Ascending aorta (tissue), 2 donors: ENCODE measurements at regions of chr1 and their contacts with region 1.

Region 1: GRCh38 chr1:183023601-183024316 is 539 bp downstream of the LAMC1 start:
- DNase-seq: peak in 1 of 2 donors; percentile 82
- H3K4me3 ChIP-seq: peak overlapping the region; percentile 87 to 100
- H3K27ac ChIP-seq: peak overlapping the region; percentile 100
- H3K4me1 ChIP-seq: peaks cover 0 to 20% of the 10 kb centered on the region in 2 donors
- H3K27me3 ChIP-seq: no peaks in the 10 kb centered on the region
- CTCF ChIP-seq: peak; percentile 26 to 51 (median 35)

Region 2: GRCh38 chr1:182839209-182840065 is 184.3 kb before region 1 on chr1 and contains the start of gene DHX9:
- intact Hi-C with region 1: no loop called
- DNase-seq: peak; percentile 55 to 96
- H3K4me3 ChIP-seq: peak within 1 kb of the TSS; percentile 75 to 95
- H3K27ac ChIP-seq: peak within 1 kb of the TSS; percentile 90 to 91
- H3K4me1 ChIP-seq: peaks cover 0 to 10% of the 10 kb centered on the region in 2 donors
- H3K27me3 ChIP-seq: no peaks in the 10 kb centered on the region
- CTCF ChIP-seq: peak in 1 of 3 experiments; percentile 20
- total RNA-seq, gene DHX9: 52.8 TPM

Region 3: GRCh38 chr1:182962554-182963115 is 61.1 kb before region 1 on chr1:
- intact Hi-C with region 1: loop called (anchors 1 kb)
- DNase-seq: peak in 1 of 2 donors; percentile 90
- H3K4me3 ChIP-seq: peak overlapping the region; percentile 32 to 33
- H3K27ac ChIP-seq: peak overlapping the region in 1 of 2 donors; percentile 12
- H3K4me1 ChIP-seq: peaks cover 0 to 2% of the 10 kb centered on the region in 2 donors
- H3K27me3 ChIP-seq: no peaks in the 10 kb centered on the region
- CTCF ChIP-seq: peak; percentile 91 to 92 (median 91)

Region 4: GRCh38 chr1:183075861-183076260 is 52.1 kb after region 1 on chr1:
- intact Hi-C with region 1: loop called (anchors 5 kb)
- DNase-seq: no peak
- H3K4me3 ChIP-seq: no peak overlapping the region
- H3K27ac ChIP-seq: peak overlapping the region; percentile 12 to 13
- H3K4me1 ChIP-seq: peaks cover 11 to 79% of the 10 kb centered on the region in 2 donors
- H3K27me3 ChIP-seq: no peaks in the 10 kb centered on the region
- CTCF ChIP-seq: no peak

Region 5: DNA sequence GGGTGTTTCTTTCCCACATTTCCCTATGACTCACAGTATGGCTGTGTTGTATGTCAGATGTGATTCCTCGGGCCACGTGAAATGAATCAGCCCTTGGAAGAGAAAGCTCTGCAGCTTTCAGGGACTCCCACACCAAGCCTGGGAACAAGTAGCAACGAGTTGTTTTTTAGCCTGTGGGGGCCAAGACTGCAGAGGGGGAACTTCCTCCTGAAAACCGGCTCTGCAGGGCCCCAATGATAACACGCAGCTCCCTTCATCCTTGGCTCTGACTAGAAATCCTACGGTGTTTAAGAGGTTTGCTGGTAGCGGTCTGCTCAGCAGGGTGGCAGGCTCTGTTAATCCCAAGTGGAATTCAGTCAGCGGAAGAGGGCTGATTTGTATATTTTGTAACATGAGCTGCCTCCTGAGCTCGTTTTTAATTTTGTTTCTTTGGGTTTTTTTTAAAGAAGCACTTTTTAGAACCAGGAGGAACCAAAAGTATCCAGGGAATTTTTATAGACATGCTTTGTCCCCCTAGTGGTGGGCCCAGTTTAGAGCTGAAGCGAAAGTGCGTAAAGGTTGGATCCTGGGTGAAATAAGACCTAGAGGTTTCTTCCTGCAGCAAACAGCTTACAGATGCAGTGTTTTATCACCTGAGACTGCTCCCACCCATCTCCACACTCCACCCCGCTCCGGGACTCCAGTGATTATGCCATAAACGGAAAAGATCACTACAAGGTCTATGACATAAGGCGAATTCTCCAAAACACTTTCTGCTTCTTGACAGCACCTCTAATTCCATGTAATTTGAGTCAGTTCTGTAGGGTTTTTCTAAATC is 211.1 kb after region 1 on chr1:
- intact Hi-C with region 1: loop called (anchors 5 kb)
- DNase-seq: peak; percentile 45 to 88
- H3K4me3 ChIP-seq: peak overlapping the region; percentile 60 to 62
- H3K27ac ChIP-seq: peak overlapping the region; percentile 77
- H3K4me1 ChIP-seq: peaks cover 0 to 11% of the 10 kb centered on the region in 2 donors
- H3K27me3 ChIP-seq: no peaks in the 10 kb centered on the region
- CTCF ChIP-seq: peak in 2 of 3 experiments; percentile 65 to 71

Region 6: GRCh38 chr1:183281553-183282091 is 257.9 kb after region 1 on chr1:
- intact Hi-C with region 1: loop called (anchors 5 kb)
- DNase-seq: peak; percentile 69 to 97
- H3K4me3 ChIP-seq: no peak overlapping the region
- H3K27ac ChIP-seq: peak overlapping the region; percentile 58 to 70
- H3K4me1 ChIP-seq: peaks cover 2 to 14% of the 10 kb centered on the region in 2 donors
- H3K27me3 ChIP-seq: no peaks in the 10 kb centered on the region
- CTCF ChIP-seq: peak; percentile 91 to 96 (median 91)

Region 7: GRCh38 chr1:183635606-183636333 is 612.0 kb after region 1 on chr1 and contains the start of gene ARPC5:
- intact Hi-C with region 1: loop called (anchors 10 kb)
- DNase-seq: peak; percentile 85 to 97
- H3K4me3 ChIP-seq: peak within 1 kb of the TSS; percentile 93 to 97
- H3K27ac ChIP-seq: peak within 1 kb of the TSS; percentile 95 to 99
- H3K4me1 ChIP-seq: peaks cover 0 to 6% of the 10 kb centered on the region in 2 donors
- H3K27me3 ChIP-seq: no peaks in the 10 kb centered on the region
- CTCF ChIP-seq: no peak
- total RNA-seq, gene ARPC5: 48.3 TPM